Body of pancreas (tissue), 4 donors: ENCODE measurements at regions of chr17 and their contacts with region 1.

Region 1: GRCh38 chr17:76504117-76504516 is 2.9 kb upstream of the RHBDF2 start:
- DNase-seq: no peak
- ATAC-seq: no peak
- H3K4me3 ChIP-seq: no peak overlapping the region
- H3K27ac ChIP-seq: no peak overlapping the region
- H3K4me1 ChIP-seq: peaks cover 41% of the 10 kb centered on the region
- H3K27me3 ChIP-seq: no peaks in the 10 kb centered on the region
- CTCF ChIP-seq: no peak
- POLR2A ChIP-seq: no peak

Region 2: DNA sequence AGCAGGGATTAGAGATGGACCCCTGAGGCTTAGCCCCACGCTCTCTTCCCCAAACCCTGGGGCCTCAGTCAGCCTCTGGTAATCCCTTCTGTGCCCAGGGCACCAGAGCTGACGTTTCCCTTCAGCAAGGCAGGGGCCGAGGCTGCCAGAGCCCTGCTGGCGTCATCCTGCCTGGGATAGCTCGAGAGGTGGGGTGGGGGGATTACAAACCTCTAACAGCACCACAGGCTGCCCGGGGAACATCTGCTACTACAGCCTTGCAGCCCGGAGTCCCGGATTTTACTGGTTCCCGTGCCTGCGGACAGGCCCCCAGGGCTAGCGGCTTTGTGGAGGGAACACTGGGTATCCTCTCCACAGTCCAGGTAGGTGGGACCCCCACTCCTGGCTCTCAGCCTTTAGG is 36.8 kb before region 1 on chr17 and contains the start of gene AANAT:
- intact Hi-C with region 1: loop called (anchors 2 kb)
- DNase-seq: no peak
- ATAC-seq: no peak
- H3K4me3 ChIP-seq: no peak within 1 kb of the TSS
- H3K27ac ChIP-seq: no peak within 1 kb of the TSS
- H3K4me1 ChIP-seq: peaks cover 3% of the 10 kb centered on the region
- H3K27me3 ChIP-seq: no peaks in the 10 kb centered on the region
- CTCF ChIP-seq: no peak
- POLR2A ChIP-seq: no peak
- total RNA-seq, gene AANAT: not detected